ENCODE measurements at regions of chr3 and their contacts with region 1.

Region 1: GRCh38 chr3:38651154-38651789 is 1.8 kb upstream of the SCN5A start:
- DNase-seq: peak; percentile 75
- ATAC-seq: peak; percentile 24 to 48

Region 2: DNA sequence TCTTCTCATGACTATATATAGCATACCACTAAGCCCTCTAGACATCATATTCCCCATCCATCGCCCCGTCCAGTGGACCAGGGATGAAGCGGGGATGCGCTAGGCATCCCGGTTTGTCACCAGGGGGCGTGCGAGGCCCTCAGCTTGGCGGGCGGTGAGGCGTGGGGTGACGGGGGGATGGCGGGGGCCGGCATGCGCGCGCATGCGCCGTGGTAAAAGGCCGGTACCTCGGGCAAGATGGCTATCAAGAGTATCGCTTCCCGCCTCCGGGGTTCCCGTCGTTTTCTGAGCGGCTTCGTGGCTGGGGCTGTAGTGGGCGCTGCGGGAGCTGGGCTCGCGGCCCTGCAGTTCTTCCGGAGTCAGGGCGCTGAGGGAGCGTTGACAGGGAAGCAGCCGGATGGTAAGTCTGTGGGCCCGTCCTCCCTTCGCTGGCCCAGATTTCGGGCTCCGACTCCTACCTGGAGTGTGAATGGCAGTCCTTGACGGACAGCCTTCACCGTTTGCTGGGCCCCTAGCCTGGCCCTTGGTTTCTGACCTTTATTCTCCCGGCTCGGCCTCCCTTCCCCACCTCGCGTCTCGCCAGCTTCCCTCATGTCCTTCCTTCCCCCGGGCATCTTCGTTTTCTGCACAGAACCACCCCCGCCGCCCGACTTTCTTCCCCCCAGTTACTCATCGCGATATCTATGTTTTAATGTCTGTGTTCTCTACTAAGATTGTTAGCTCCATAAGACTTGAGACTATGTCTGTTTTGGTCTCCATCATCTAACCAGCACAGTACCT is 155.0 kb before region 1 on chr3 and contains the start of gene EXOG:
- intact Hi-C with region 1: loop called (anchors 2 to 10 kb)
- DNase-seq: peak; percentile 95
- ATAC-seq: peak; percentile 97
- total RNA-seq, gene EXOG: 17.8 to 20.5 TPM

Region 3: GRCh38 chr3:38521391-38521987 is 129.8 kb before region 1 on chr3:
- intact Hi-C with region 1: loop called (anchors 2 to 5 kb)
- DNase-seq: peak; percentile 49
- ATAC-seq: peak; percentile 65 to 72

Region 4: DNA sequence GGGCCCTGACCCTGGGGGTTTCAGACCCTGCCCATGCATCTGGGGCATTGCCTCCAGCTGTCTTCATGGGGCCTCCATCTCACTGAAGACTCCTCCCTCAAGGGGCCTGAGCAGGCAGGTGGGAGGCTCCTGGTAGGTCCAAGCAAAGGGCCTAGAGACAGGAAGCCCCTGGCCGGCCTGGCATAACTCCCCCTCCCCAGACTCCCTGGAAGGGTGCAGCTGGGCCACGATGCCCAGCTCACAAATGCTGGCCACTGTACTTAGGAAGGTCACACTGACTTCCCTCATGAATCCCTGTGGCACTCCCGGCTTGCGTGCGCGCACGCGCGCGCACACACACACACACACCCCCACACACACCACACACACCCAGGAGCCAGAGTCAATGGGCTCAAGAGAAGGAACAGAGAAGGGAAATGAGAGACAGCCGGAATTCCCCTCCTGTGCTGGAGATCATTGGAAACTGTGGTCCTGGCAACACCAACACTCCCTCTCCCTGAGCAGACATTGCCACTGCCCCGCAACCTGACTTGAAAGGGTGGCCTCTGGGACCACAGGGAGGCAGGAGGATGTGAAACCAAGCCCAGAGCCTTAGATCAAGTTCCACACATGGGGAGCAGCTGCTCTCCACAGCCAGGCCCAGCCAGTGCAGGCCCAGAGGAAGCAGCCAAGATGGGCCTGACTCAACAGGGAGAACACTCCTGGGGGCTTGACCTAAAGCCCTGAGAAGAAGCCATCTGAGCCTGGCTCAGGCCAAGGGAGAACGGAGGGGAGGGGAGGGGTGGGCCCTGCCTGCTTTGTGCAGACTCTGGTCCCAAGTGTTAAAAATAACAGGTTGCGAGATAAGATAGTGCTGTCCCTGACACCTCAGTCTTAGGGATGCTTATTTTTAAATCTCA is 71.5 kb before region 1 on chr3:
- intact Hi-C with region 1: loop called in 1 of 2 experiments (anchors 5 kb)
- DNase-seq: peak; percentile 61
- ATAC-seq: peak; percentile 84 to 86

Region 5: DNA sequence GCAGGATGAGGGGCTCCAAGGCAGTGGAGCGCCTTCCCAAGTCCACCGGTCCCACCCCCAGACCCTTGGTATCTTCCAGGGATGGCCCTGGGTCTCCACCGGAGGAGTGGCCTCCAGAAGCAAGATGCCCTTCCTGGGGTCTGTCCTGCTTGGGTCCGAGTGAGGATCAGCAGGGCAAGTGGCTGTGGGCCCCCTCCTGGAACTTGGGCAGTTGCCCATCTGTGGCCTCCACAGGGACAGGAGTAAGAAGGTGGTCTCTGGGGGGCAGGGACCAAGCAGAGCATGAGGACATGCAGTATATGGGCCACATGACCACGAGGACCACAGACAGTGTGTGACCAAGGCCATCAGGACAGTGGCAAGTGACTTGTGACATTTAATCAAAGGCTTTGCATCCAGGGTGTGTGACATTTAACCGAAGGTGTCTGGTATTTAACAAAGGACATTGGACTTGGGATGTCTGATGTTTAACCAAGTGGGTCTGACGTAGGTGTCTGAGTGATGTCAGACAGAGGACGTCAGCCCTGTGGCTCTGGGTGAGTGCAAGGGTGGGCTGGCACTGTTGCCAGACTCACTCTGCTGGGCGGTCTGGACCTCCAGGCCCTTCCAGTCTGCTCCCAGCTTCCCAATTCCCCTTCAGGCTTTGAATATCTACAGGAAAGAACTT is 36.5 kb before region 1 on chr3:
- intact Hi-C with region 1: loop called in 1 of 2 experiments (anchors 1 kb)
- DNase-seq: peak; percentile 63
- ATAC-seq: peak in 1 of 2 donors; percentile 35

Region 6: GRCh38 chr3:38843898-38844297 is 192.6 kb after region 1 on chr3:
- intact Hi-C with region 1: loop called in 1 of 2 experiments (anchors 5 kb)
- DNase-seq: no peak
- ATAC-seq: peak; percentile 71 to 84